ENCODE measurements at regions of chrX and their contacts with region 1.

Region 1: DNA sequence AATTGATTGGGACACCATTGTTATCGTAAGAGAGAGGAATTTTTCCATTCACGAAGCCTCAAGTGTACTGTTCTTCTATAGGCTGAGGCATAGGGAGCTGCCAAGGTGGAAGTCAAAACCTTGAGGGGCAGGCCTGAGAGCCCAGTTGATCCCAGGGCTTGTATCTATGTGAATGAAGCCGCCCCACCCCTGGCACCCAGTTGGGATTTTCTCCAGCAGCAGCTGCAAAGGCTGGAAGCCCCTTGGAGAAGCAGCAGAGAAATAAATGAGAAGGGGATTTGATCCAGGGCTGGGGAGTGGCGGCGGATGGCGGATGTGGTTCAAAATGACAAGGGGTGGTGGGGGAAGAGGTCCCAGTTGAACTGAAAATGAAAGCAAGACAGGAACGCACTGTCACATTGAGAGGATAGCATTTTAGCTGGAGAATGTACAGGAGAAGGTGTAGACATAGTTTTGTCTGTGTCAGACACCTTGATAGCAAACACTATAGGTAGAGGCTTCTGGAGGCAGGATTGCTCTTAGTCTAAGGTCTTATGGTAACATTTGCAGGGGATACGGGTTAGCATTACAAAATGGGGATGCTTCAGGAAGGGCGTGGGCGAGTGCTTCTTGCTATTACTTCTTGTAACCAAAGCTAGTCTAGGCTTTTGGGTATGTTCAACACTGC is 32.6 kb downstream of the DOCK11 start:
- DNase-seq: peak; percentile 87
- H3K4me3 Mint-ChIP-seq: peak overlapping the region; percentile 92
- H3K27ac Mint-ChIP-seq: peak overlapping the region; percentile 99
- H3K4me1 Mint-ChIP-seq: peaks cover 50% of the 10 kb centered on the region
- H3K27me3 Mint-ChIP-seq: no peaks in the 10 kb centered on the region

Region 2: GRCh38 chrX:118503260-118504041 is 24.8 kb before region 1 on chrX:
- intact Hi-C with region 1: loop called (anchors 1 kb)
- DNase-seq: no peak
- H3K4me3 Mint-ChIP-seq: peak overlapping the region; percentile 67
- H3K27ac Mint-ChIP-seq: peak overlapping the region; percentile 82
- H3K4me1 Mint-ChIP-seq: peaks cover 31% of the 10 kb centered on the region
- H3K27me3 Mint-ChIP-seq: no peaks in the 10 kb centered on the region

Measured in activated CD4-positive, alpha-beta T cell treated with anti-CD3 and anti-CD28 coated beads, Interleukin-2, amount 10 ng/mL, durations not matched to agents 24 days and 14 days (primary cell).